GM13976 (cell line): ENCODE measurements at regions of chr6 and their contacts with region 1.

Region 1: DNA sequence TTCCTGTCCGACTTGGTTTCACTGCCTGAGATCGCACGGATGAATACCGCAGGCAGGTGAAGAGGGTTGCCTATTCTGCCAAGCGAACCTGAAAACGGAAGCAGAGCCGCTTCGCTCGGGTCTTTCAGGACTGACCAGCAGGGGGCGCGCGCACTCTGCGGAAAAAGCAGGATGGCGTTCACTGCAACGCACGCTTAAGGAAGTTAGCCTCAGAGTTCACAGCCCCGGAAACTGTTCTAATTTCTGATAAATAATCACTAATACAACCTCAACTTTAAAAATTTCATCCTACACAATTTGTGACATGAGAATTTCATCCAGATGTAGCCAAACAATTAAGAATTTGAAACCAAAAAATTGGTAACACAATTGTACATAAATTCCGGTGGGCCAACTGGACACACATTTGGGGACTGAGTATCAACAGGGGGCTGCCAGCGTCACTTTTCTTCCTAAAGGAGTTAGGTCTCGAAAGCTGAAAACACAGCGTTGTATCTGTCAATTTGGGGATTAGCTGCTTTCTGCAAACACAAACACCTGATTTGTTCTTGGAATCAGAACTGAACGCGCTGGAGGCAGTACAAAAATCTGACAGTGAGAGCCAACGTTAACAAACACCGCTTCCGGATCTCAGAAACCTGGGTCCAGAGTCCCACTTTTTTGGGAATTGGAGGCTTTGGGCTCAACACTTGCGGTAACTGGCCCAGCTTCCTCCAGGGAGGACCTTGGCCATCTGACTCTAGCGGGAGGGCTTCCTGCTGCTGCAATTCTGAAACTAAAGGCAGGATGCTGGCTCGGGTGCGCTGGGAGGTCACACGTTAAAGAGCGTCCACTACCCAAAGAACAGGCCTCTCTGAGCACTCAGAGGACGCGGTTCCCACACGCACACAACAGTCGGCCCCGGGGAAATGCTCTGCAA is 8.8 kb downstream of the PXDC1 start:
- DNase-seq: peak; percentile 88
- CTCF ChIP-seq: peak; percentile 89

Region 2: GRCh38 chr6:3983778-3984177 is 241.1 kb after region 1 on chr6:
- in situ Hi-C with region 1: loop called (anchors 5 kb)
- DNase-seq: no peak
- CTCF ChIP-seq: no peak

Region 3: DNA sequence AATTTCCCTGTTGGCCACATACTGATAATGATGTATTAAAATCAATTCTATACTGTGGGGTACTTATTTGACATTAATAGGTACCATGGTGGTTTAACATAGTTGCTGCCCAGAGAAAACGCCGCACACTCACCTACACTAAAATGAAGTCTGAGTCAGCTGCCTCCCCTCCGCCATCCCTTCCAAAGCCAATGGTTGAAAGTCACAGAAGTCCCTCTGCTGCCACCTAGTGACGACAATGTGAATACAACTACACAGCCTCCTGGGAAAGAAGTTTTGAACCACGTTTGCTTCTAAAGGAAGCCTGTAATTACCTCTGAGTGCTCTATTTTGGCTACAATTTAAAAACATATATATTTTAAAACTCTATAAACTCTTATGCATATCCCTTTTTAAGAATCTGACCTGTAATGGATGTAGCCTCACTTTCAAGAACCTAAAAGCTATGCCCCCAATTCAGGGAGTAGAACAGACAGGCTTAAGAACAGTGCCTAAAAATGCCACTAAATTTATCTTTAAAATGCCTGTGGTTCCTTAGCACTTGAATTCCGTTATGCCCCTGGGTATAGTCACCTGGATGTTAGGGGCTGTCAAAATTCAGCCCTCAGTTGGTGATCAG is 413.3 kb after region 1 on chr6:
- in situ Hi-C with region 1: loop called (anchors 25 kb)
- DNase-seq: peak; percentile 78
- CTCF ChIP-seq: peak; percentile 77